HepG2 (cell line): ENCODE measurements at regions of chr5 and their contacts with region 1.

Region 1: DNA sequence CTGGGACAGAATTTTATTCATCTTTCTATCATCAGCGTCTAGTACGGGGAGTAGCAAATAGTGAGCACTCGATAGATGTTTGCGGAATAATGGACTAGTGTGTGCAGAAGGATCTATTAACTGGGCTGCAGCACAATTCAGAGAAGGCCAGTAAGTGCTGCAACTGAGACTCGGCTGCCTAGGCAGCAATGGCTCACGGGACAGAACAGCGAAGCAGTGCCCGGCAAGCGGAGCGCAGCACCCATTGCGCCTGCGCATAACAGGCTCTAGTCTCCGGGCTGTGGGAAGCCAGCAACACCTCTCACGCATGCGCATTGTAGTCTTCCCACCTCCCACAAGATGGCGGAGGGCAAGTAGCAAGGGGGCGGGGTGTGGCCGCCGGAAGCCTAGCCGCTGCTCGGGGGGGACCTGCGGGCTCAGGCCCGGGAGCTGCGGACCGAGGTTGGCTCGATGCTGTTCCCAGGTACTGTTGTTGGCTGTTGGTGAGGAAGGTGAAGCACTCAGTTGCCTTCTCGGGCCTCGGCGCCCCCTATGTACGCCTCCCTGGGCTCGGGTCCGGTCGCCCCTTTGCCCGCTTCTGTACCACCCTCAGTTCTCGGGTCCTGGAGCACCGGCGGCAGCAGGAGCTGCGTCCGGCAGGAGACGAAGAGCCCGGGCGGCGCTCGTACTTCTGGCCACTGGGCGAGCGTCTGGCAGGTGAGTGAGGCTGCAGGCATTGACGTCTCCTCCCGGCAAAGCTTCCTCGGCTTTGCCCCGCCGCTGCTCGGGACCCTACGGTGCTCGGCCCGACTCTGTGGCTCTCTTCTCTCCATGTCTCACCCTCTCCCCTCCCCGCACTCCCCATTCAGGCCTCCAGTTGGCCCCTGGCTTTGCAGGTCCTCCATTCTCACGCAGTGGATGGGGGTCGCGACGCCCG is 30.2 kb upstream of the APC start:
- DNase-seq: peak; percentile 98
- ATAC-seq: peak; percentile 94
- H3K4me3 ChIP-seq: peak overlapping the region; percentile 93 to 98 (median 95)
- H3K27ac ChIP-seq: peak overlapping the region; percentile 90
- H3K4me1 ChIP-seq: peaks cover 47% of the 10 kb centered on the region
- H3K27me3 ChIP-seq: peaks cover 0 to 1% of the 10 kb centered on the region in 2 experiments; a peak in 1 of 5 replicates
- CTCF ChIP-seq: no peak; the same call in 1 of the 2 replicates
- EP300 ChIP-seq: no peak
- POLR2A ChIP-seq: peak; percentile 92 to 94
- RAD21 ChIP-seq: peak; percentile 33; the same call in 1 of the 2 replicates

Region 2: DNA sequence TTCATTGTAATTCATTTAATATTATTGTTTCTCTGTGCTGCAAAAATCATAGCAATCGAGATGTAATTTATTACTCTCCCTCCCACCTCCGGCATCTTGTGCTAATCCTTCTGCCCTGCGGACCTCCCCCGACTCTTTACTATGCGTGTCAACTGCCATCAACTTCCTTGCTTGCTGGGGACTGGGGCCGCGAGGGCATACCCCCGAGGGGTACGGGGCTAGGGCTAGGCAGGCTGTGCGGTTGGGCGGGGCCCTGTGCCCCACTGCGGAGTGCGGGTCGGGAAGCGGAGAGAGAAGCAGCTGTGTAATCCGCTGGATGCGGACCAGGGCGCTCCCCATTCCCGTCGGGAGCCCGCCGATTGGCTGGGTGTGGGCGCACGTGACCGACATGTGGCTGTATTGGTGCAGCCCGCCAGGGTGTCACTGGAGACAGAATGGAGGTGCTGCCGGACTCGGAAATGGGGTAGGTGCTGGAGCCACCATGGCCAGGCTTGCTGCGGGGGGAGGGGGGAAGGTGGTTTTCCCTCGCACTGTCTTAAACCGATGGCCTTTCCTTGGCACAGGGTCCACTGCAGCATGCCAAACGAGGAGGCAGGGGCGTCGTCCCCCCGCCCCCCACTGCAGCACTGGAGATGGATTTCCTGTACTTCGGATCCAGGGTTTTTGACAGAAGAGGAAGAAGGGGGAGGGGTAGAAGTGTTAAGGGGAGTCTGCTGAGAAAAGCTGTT is 30.2 kb after region 1 on chr5 and contains the start of gene APC:
- CTCF ChIA-PET with region 1: no interaction called
- POLR2A ChIA-PET with region 1: interaction called, 6 read pairs
- in situ Hi-C with region 1: no loop called
- intact Hi-C with region 1: loop called (anchors 2 kb)
- DNase-seq: peak; percentile 54
- ATAC-seq: peak; percentile 100
- H3K4me3 ChIP-seq: peak within 1 kb of the TSS; percentile 52 to 86 (median 79)
- H3K27ac ChIP-seq: no peak within 1 kb of the TSS
- H3K4me1 ChIP-seq: peaks cover 9% of the 10 kb centered on the region
- H3K27me3 ChIP-seq: no peaks in the 10 kb centered on the region
- CTCF ChIP-seq: no peak
- EP300 ChIP-seq: no peak
- POLR2A ChIP-seq: no peak
- RAD21 ChIP-seq: no peak
- total RNA-seq, gene APC: 19.0 and 19.4 TPM in 2 replicates

Region 3: DNA sequence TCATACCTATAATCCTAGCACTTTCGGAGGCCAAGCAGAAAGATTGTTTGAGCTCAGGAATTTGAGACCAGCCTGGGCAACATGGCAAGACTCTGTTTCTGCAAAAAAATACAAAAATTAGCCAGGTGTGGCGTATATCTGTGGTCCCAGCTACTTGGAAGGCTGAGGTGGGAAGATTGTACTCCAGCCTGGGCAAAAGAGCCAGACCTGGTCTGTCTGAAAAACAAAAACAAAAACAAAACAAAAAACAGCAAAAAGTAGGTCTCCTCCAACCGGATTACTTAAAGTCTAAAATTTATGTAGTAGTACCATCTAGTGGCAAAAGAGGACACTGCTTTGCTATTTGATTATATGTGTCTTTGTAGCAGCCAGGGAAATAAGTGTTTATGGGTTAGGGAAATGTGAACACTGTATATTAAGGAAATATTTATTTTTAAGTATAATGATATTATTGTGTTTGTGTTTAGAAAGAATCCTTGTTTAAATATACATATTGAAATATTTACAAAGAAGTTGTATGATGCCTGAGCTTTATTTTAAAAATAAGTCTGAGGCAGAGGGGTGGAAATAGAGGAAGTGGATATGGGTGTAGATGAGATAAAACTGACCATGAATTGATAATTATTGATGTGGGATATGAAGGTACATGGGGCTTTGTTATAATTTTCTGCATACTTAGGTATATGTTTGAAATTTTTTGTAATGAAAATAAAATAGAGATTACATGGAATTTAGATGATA is 50.2 kb after region 1 on chr5:
- CTCF ChIA-PET with region 1: no interaction called
- POLR2A ChIA-PET with region 1: no interaction called
- in situ Hi-C with region 1: no loop called
- intact Hi-C with region 1: loop called (anchors 5 kb)
- DNase-seq: peak; percentile 61
- ATAC-seq: peak; percentile 85
- H3K4me3 ChIP-seq: no peak overlapping the region
- H3K27ac ChIP-seq: no peak overlapping the region
- H3K4me1 ChIP-seq: no peaks in the 10 kb centered on the region
- H3K27me3 ChIP-seq: no peaks in the 10 kb centered on the region
- CTCF ChIP-seq: peak; percentile 72
- EP300 ChIP-seq: no peak
- POLR2A ChIP-seq: no peak
- RAD21 ChIP-seq: 0 out of 2 replicates have a peak, but pooled peaks have one; percentile 36

Region 4: DNA sequence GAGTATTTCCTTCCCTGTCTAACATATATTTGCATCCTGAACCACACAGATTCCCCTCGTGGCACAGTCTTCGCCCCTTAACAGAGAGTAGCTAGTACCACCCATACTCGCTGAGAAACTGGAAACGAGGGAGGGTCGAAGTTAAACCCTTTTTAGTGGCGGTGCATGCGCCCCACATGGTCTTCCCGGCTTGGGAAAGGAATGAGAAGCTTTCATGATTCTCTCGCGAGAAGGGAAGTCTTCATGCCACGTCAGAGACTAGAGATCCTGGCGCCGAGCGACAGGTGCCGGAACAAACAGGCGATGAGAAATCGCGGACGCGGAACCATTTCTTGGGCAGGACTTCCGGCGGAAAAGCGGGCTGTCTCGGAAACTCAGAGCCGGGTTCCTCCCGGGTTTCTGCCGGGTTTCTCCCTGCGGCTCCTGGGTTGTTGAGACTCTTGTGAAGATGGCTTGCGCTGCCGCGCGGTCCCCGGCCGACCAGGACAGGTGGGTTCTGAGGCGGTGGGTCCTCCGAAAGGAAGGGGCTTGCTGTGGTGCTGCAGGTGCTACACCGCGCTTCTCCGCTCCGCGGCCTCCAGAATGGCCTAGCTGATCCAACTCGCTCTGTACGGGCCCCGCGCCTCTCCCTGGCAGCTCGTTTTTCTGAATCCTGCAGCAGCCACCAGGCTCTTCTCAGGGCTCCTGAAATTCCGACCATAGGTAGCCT is 153.6 kb after region 1 on chr5 and contains the start of gene SRP19:
- CTCF ChIA-PET with region 1: no interaction called
- POLR2A ChIA-PET with region 1: interaction called, 4 read pairs
- in situ Hi-C with region 1: no loop called
- intact Hi-C with region 1: loop called (anchors 5 kb)
- DNase-seq: peak; percentile 97
- ATAC-seq: peak; percentile 96
- H3K4me3 ChIP-seq: peak within 1 kb of the TSS; percentile 85 to 100 (median 93)
- H3K27ac ChIP-seq: peak within 1 kb of the TSS; percentile 89
- H3K4me1 ChIP-seq: peaks cover 32% of the 10 kb centered on the region
- H3K27me3 ChIP-seq: no peaks in the 10 kb centered on the region; a peak in 1 of 5 replicates
- CTCF ChIP-seq: no peak
- EP300 ChIP-seq: 0 out of 4 replicates have a peak, but pooled peaks of 1 of the 2 experiments have one; percentile 13
- POLR2A ChIP-seq: peak; percentile 68 to 80; a peak in 3 of 4 replicates
- RAD21 ChIP-seq: peak; percentile 25; the same call in 1 of the 2 replicates
- total RNA-seq, gene SRP19: 143 and 214 TPM in 2 replicates